ENCODE measurements at regions of chr7 and their contacts with region 1.

Region 1: GRCh38 chr7:111012799-111013675 is 77.9 kb upstream of the LRRN3 start:
- DNase-seq: peak; percentile 67
- H3K4me3 Mint-ChIP-seq: peak overlapping the region; percentile 37
- H3K27ac Mint-ChIP-seq: peak overlapping the region; percentile 86
- H3K4me1 Mint-ChIP-seq: peaks cover 72% of the 10 kb centered on the region
- H3K27me3 Mint-ChIP-seq: no peaks in the 10 kb centered on the region

Region 2: GRCh38 chr7:110977127-110977737 is 35.8 kb before region 1 on chr7:
- CTCF ChIA-PET with region 1: no interaction called
- intact Hi-C with region 1: loop called (anchors 1 kb)
- DNase-seq: no peak
- H3K4me3 Mint-ChIP-seq: no peak overlapping the region
- H3K27ac Mint-ChIP-seq: no peak overlapping the region
- H3K4me1 Mint-ChIP-seq: peaks cover 40% of the 10 kb centered on the region
- H3K27me3 Mint-ChIP-seq: peaks cover 3% of the 10 kb centered on the region

Region 3: DNA sequence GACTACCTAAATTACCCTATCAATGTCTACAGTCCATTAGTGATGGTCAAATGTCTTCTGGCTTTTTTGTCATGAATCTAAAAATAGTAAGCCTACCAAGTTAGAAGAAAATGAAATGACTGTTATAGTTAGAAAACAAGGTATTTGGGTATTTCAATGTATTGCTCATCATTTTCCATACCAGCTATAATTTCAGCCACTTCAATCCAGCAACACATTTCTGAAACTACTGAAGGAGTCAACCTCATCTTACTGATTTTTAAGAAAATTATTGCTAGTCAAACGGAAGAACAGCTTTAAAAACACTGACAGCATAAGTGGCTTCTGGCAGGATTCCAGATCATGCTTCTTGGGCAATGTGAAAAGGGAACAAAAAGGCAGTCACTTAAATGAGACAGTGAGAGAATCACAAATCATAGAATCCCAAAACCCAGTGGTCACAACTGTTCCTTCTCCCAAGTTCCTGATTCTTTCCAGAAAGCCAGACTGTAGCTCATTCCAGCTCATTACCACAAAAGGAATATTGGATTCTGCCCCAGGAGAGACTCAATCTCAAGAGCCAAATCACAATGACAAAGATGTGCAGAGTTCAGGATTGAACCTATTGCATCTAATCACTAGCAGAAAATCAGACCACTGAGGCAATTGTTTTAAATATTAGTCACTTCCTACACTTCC is 16.7 kb after region 1 on chr7:
- CTCF ChIA-PET with region 1: interaction called, 4 read pairs
- intact Hi-C with region 1: loop called (anchors 1 kb)
- DNase-seq: peak; percentile 76
- H3K4me3 Mint-ChIP-seq: peak overlapping the region; percentile 34
- H3K27ac Mint-ChIP-seq: peak overlapping the region; percentile 89
- H3K4me1 Mint-ChIP-seq: peaks cover 54% of the 10 kb centered on the region
- H3K27me3 Mint-ChIP-seq: no peaks in the 10 kb centered on the region

Region 4: GRCh38 chr7:111083413-111083812 is 70.4 kb after region 1 on chr7:
- CTCF ChIA-PET with region 1: no interaction called
- intact Hi-C with region 1: loop called (anchors 1 kb)
- DNase-seq: peak; percentile 70
- H3K4me3 Mint-ChIP-seq: no peak overlapping the region
- H3K27ac Mint-ChIP-seq: peak overlapping the region; percentile 76
- H3K4me1 Mint-ChIP-seq: peaks cover 72% of the 10 kb centered on the region
- H3K27me3 Mint-ChIP-seq: no peaks in the 10 kb centered on the region

Region 5: GRCh38 chr7:111138196-111138569 is 125.1 kb after region 1 on chr7:
- CTCF ChIA-PET with region 1: no interaction called
- intact Hi-C with region 1: loop called (anchors 1 kb)
- DNase-seq: peak; percentile 86
- H3K4me3 Mint-ChIP-seq: peak overlapping the region; percentile 62
- H3K27ac Mint-ChIP-seq: peak overlapping the region; percentile 92
- H3K4me1 Mint-ChIP-seq: peaks cover 32% of the 10 kb centered on the region
- H3K27me3 Mint-ChIP-seq: no peaks in the 10 kb centered on the region

Region 6: DNA sequence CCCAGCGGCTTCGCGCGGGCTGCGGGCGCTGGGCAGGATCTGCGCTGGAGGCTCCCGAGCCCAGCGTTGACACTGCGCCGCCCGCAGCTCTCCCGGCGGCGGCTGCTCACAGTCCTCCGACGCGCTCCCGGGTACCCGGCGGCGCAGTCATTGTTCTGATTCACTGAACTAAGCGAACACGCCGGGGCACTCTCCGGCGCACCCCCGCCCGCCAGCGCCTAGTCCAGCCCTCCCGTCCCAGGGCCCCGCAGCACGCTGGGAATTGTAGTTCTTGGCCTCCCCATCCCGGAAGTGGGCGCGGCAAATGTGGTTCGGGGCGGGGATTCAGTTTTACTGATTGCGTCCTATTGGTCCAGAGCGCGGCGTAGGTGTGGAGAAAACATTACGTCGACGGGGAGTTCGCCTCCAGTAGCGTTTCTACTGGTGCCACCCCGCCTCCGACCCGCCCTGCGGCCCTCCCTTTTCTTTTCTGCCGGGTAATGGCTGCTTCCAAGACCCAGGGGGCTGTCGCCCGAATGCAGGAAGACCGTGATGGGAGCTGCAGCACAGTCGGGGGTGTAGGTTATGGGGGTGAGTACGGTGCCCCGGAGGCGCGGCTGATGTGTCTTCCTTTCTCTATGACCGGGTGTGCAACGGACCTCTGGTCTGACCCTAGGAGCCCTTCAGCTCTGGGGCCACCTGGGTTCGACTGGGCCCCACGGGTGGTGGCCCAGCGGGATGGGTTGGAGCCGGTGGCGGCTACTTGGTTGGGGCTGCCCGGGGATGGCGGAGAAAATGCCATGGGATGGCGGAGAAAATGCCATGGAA is 1193.4 kb after region 1 on chr7 and contains the starts of genes DOCK4 and ZNF277:
- CTCF ChIA-PET with region 1: no interaction called
- intact Hi-C with region 1: loop called (anchors 5 kb)
- DNase-seq: peak; percentile 99
- H3K4me3 Mint-ChIP-seq: peak within 1 kb of the TSS; percentile 97
- H3K27ac Mint-ChIP-seq: peak within 1 kb of the TSS; percentile 71
- H3K4me1 Mint-ChIP-seq: peaks cover 35% of the 10 kb centered on the region
- H3K27me3 Mint-ChIP-seq: peaks cover 28% of the 10 kb centered on the region
- total RNA-seq, gene DOCK4: 0.43 to 0.62 TPM
- total RNA-seq, gene ZNF277: 27.0 to 28.2 TPM

Measured in activated naive CD4-positive, alpha-beta T cell treated with anti-CD3 and anti-CD28 coated beads for 36 hours (primary cell).